T-cell (primary cell): ENCODE measurements at regions of chr16 and their contacts with region 1.

Region 1: GRCh38 chr16:17138801-17139200 is 332.0 kb downstream of the XYLT1 start:
- DNase-seq: no peak
- ATAC-seq: no peak
- H3K4me3 ChIP-seq: no peak overlapping the region
- H3K4me3 Mint-ChIP-seq: no peak overlapping the region
- H3K27ac ChIP-seq: no peak overlapping the region
- H3K27ac Mint-ChIP-seq: no peak overlapping the region
- H3K4me1 ChIP-seq: peaks cover 0 to 4% of the 10 kb centered on the region in 2 experiments
- H3K4me1 Mint-ChIP-seq: peaks cover 5 to 10% (median 5%) of the 10 kb centered on the region in 3 donors
- H3K27me3 ChIP-seq: no peaks in the 10 kb centered on the region
- H3K27me3 Mint-ChIP-seq: no peaks in the 10 kb centered on the region

Region 2: DNA sequence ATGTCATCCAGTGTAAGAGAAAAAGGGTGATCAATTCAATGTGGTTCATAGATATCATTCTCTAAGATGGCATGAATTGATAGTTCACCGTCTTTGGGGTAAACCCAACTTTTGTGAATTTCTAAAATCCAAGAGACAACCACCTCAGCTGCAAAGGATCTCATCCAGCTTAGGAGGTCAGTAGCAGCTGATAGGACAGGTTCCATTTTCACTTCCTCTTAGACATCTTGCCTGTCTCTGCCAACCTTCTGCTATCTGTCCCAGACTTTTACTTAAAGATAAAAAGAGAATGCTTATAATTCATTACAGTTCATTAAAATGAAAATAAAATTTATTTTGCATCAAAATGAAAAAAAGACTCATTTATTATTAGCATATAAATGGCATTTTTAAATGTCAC is 136.2 kb before region 1 on chr16:
- CTCF ChIA-PET with region 1: interaction called in 1 of 2 experiments, 11 read pairs
- POLR2A ChIA-PET with region 1: no interaction called
- DNase-seq: no peak
- ATAC-seq: no peak
- H3K4me3 ChIP-seq: no peak overlapping the region
- H3K4me3 Mint-ChIP-seq: no peak overlapping the region
- H3K27ac ChIP-seq: no peak overlapping the region
- H3K27ac Mint-ChIP-seq: no peak overlapping the region
- H3K4me1 ChIP-seq: no peaks in the 10 kb centered on the region
- H3K4me1 Mint-ChIP-seq: no peaks in the 10 kb centered on the region
- H3K27me3 ChIP-seq: no peaks in the 10 kb centered on the region
- H3K27me3 Mint-ChIP-seq: no peaks in the 10 kb centered on the region